ENCODE measurements at regions of chr10 and their contacts with region 1.

Region 1: DNA sequence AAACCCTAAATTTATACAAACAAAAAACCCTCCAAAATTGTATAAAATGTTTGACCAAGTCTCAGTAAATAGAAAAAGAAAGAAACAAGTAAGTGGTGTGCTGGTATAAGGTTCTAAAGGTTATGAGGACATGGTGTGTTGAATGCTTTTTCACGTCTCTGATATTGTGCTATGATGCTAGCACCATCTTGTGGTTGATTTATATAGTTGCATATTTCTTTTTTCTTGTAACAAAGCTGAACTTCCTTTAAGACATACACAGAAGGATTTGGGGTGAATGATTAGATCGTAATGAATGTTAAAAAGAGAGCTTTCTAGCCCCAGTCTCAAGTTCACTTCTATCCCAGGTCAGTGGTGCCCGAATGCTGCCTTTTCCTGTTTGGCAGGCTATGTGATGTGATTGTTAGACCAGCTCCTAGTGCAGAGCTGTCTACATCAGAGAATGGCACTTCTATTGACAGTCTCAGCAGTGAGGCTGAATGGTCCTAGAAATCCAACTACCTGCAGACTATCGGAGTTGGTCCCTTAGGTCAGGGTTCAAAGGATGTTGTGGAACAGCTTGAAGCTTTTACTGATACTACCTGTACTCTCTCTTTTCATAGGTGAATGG is 25.0 kb downstream of the VTI1A start:
- DNase-seq: no peak
- H3K4me3 Mint-ChIP-seq: no peak overlapping the region
- H3K27ac Mint-ChIP-seq: no peak overlapping the region
- H3K4me1 Mint-ChIP-seq: peaks cover 4% of the 10 kb centered on the region
- H3K27me3 Mint-ChIP-seq: no peaks in the 10 kb centered on the region

Region 2: DNA sequence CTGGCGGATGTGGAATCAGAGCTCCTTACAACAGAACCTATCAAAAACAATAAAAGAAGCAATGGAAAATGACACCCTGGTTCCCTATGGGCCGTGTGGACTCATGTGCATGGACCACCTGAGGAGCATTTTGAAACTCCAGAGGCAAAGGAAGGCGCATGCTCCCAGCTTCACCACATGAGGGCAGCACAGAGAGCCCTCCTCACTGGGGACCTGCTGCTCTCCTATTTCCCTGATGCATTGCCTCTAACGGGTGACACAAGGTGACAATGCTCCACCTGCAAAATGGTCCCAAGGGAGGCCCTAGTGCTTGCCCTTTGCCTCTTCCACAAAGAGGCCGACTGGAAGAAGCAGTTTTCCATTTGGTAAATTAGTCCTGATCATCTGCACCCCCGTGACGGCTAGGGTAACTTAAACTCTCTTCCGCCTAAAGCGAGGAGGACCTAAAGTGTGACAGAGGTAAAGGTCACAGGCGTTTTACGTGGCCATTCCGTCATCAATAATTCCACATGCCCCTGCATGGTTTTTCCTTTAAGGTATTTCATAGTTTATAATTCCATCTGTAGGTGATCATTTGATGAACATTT is 356.1 kb before region 1 on chr10:
- CTCF ChIA-PET with region 1: interaction called, 4 read pairs
- POLR2A ChIA-PET with region 1: no interaction called
- intact Hi-C with region 1: loop called (anchors 1 kb)
- DNase-seq: peak; percentile 58
- H3K4me3 Mint-ChIP-seq: no peak overlapping the region
- H3K27ac Mint-ChIP-seq: no peak overlapping the region
- H3K4me1 Mint-ChIP-seq: no peaks in the 10 kb centered on the region
- H3K27me3 Mint-ChIP-seq: no peaks in the 10 kb centered on the region

Region 3: GRCh38 chr10:112307358-112308124 is 164.4 kb before region 1 on chr10:
- CTCF ChIA-PET with region 1: interaction called, 25 read pairs
- POLR2A ChIA-PET with region 1: no interaction called
- intact Hi-C with region 1: no loop called
- DNase-seq: peak; percentile 52
- H3K4me3 Mint-ChIP-seq: no peak overlapping the region
- H3K27ac Mint-ChIP-seq: no peak overlapping the region
- H3K4me1 Mint-ChIP-seq: no peaks in the 10 kb centered on the region
- H3K27me3 Mint-ChIP-seq: peaks cover 13% of the 10 kb centered on the region

Region 4: GRCh38 chr10:112442063-112442462 is 29.9 kb before region 1 on chr10:
- CTCF ChIA-PET with region 1: interaction called, 36 read pairs
- POLR2A ChIA-PET with region 1: interaction called, 3 read pairs
- intact Hi-C with region 1: loop called (anchors 1 kb)
- DNase-seq: no peak
- H3K4me3 Mint-ChIP-seq: peak overlapping the region; percentile 15
- H3K27ac Mint-ChIP-seq: peak overlapping the region; percentile 72
- H3K4me1 Mint-ChIP-seq: peaks cover 40% of the 10 kb centered on the region
- H3K27me3 Mint-ChIP-seq: no peaks in the 10 kb centered on the region

Region 5: GRCh38 chr10:113111859-113112853 is 640.2 kb after region 1 on chr10:
- CTCF ChIA-PET with region 1: interaction called, 4 read pairs
- POLR2A ChIA-PET with region 1: no interaction called
- intact Hi-C with region 1: loop called (anchors 5 kb)
- DNase-seq: no peak
- H3K4me3 Mint-ChIP-seq: no peak overlapping the region
- H3K27ac Mint-ChIP-seq: no peak overlapping the region
- H3K4me1 Mint-ChIP-seq: no peaks in the 10 kb centered on the region
- H3K27me3 Mint-ChIP-seq: peaks cover 6% of the 10 kb centered on the region

Region 6: DNA sequence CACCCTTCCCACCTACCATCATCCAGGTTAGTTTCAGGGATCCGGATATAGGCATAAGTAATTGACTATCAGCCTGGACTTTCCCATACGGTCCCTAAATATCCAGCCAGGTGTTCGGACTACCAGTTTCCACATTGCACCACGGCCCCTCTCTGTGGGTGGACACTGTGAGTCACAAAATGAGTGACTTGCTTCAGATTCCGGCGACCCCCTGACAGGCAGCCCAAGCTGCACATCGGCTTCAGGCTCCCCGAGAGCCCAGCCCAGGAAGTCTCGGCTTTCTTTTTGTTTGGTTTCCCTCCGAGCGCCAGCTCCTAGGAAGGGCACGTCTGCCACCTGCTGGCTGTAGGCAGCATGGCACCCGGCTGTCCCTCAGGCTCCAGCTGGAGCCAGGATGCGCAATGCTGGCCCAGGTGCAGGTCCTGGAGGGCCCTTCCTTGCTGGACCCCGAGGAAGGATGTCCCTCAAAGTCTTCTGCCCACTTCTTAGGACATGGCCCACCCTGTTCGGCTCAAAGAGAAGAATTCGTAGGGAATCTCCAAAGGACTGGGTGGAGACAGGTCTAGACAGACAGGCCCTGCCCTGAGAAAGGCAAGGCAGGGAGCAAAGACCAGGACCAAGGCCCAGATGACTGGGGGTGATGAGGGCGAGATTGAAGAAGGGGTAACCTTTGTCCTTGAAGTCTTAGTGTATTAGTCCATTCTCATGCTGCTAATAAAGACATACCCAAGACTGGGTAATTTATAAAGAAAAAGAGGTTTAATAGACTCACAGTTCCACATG is 1091.5 kb after region 1 on chr10:
- CTCF ChIA-PET with region 1: interaction called, 3 read pairs
- POLR2A ChIA-PET with region 1: no interaction called
- intact Hi-C with region 1: loop called (anchors 5 kb)
- DNase-seq: peak; percentile 78
- H3K4me3 Mint-ChIP-seq: peak overlapping the region; percentile 54
- H3K27ac Mint-ChIP-seq: no peak overlapping the region
- H3K4me1 Mint-ChIP-seq: no peaks in the 10 kb centered on the region
- H3K27me3 Mint-ChIP-seq: peaks cover 4% of the 10 kb centered on the region

Measured in activated CD4-positive, alpha-beta memory T cell treated with anti-CD3 and anti-CD28 coated beads for 36 hours (primary cell).